IMR-90 (cell line): ENCODE measurements at regions of chr3 and their contacts with region 1.

Region 1: GRCh38 chr3:99753268-99753975 is 64.2 kb upstream of the CMSS1 start:
- DNase-seq: peak; percentile 86
- ATAC-seq: peak; percentile 92
- H3K4me3 ChIP-seq: no peak overlapping the region
- H3K27ac ChIP-seq: peak overlapping the region; percentile 30
- H3K4me1 ChIP-seq: peaks cover 13% of the 10 kb centered on the region
- H3K27me3 ChIP-seq: no peaks in the 10 kb centered on the region
- CTCF ChIP-seq: peak; percentile 85
- POLR2A ChIP-seq: 0 out of 2 replicates have a peak, but pooled peaks have one; percentile 28
- RAD21 ChIP-seq: peak; percentile 92

Region 2: GRCh38 chr3:98817547-98818041 is 935.8 kb before region 1 on chr3:
- CTCF ChIA-PET with region 1: no interaction called
- POLR2A ChIA-PET with region 1: no interaction called
- dilution Hi-C with region 1: no loop called
- in situ Hi-C with region 1: loop called (anchors 10 kb)
- intact Hi-C with region 1: loop called (anchors 5 kb)
- DNase-seq: peak; percentile 59
- ATAC-seq: peak; percentile 65
- H3K4me3 ChIP-seq: no peak overlapping the region
- H3K27ac ChIP-seq: no peak overlapping the region
- H3K4me1 ChIP-seq: peaks cover 4% of the 10 kb centered on the region
- H3K27me3 ChIP-seq: no peaks in the 10 kb centered on the region
- CTCF ChIP-seq: peak; percentile 69
- POLR2A ChIP-seq: no peak
- RAD21 ChIP-seq: peak; percentile 72

Region 3: GRCh38 chr3:99172736-99173657 is 580.4 kb before region 1 on chr3:
- CTCF ChIA-PET with region 1: no interaction called
- POLR2A ChIA-PET with region 1: no interaction called
- dilution Hi-C with region 1: no loop called
- in situ Hi-C with region 1: loop called (anchors 10 kb)
- intact Hi-C with region 1: loop called (anchors 5 kb)
- DNase-seq: peak; percentile 80
- ATAC-seq: peak; percentile 82
- H3K4me3 ChIP-seq: no peak overlapping the region
- H3K27ac ChIP-seq: no peak overlapping the region
- H3K4me1 ChIP-seq: no peaks in the 10 kb centered on the region
- H3K27me3 ChIP-seq: no peaks in the 10 kb centered on the region
- CTCF ChIP-seq: peak; percentile 86
- POLR2A ChIP-seq: no peak
- RAD21 ChIP-seq: peak; percentile 87

Region 4: DNA sequence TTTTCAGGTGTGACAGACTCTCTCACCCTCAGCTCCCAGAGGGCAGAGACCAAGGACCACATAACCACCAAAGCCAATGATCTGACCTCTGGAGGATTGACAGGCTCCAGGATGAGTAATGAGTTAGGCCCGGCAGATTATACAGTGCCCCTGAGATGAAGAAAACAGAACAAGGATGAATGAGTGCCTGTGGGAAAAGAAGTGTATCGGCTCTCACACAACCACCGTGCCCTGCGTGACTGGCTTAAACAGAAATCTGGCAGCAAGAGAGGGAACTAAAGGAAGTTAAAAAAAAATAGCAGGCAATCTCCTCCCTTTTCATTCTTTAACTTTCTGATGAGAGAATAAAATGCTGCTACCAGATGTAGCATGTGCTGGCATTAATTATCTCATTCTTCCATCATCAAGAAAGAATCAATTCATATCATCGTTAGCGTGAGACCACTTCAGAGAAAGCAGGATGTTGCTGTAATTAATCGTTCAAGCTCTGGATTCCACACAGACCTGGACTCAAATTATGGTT is 342.6 kb before region 1 on chr3:
- CTCF ChIA-PET with region 1: no interaction called
- POLR2A ChIA-PET with region 1: no interaction called
- dilution Hi-C with region 1: no loop called
- in situ Hi-C with region 1: no loop called
- intact Hi-C with region 1: loop called (anchors 10 kb)
- DNase-seq: peak; percentile 79
- ATAC-seq: peak; percentile 48
- H3K4me3 ChIP-seq: no peak overlapping the region
- H3K27ac ChIP-seq: peak overlapping the region; percentile 41
- H3K4me1 ChIP-seq: peaks cover 10% of the 10 kb centered on the region
- H3K27me3 ChIP-seq: no peaks in the 10 kb centered on the region
- CTCF ChIP-seq: no peak
- POLR2A ChIP-seq: no peak
- RAD21 ChIP-seq: no peak

Region 5: DNA sequence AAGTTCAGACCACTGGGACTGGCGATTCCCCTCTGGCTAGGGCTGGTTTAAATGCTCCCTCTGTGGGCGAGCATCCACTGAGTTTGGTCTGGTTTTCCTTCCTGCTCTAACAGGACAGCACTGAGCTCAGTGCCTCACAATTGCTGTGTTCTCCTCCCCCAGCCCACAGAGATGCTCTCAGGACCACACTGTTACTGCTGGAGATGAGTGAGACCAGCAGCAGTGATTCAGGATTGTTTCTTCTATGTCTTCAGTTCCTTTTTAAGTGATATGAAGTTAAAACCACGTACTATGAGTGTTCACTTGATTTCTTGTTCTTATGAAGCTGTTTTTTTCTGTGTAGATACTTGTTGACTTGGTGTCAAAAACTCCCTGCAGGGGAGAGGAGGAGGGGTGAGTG is 295.4 kb before region 1 on chr3:
- CTCF ChIA-PET with region 1: no interaction called
- POLR2A ChIA-PET with region 1: no interaction called
- dilution Hi-C with region 1: no loop called
- in situ Hi-C with region 1: no loop called
- intact Hi-C with region 1: no loop called
- DNase-seq: no peak
- ATAC-seq: no peak
- H3K4me3 ChIP-seq: no peak overlapping the region
- H3K27ac ChIP-seq: no peak overlapping the region
- H3K4me1 ChIP-seq: no peaks in the 10 kb centered on the region
- H3K27me3 ChIP-seq: no peaks in the 10 kb centered on the region
- CTCF ChIP-seq: no peak
- POLR2A ChIP-seq: no peak
- RAD21 ChIP-seq: no peak

Region 6: GRCh38 chr3:99532246-99532645 is 221.2 kb before region 1 on chr3:
- CTCF ChIA-PET with region 1: interaction called, 4 read pairs
- POLR2A ChIA-PET with region 1: no interaction called
- dilution Hi-C with region 1: no loop called
- in situ Hi-C with region 1: no loop called
- intact Hi-C with region 1: loop called (anchors 5 kb)
- DNase-seq: peak; percentile 77
- ATAC-seq: peak; percentile 64
- H3K4me3 ChIP-seq: no peak overlapping the region
- H3K27ac ChIP-seq: no peak overlapping the region
- H3K4me1 ChIP-seq: peaks cover 13% of the 10 kb centered on the region
- H3K27me3 ChIP-seq: no peaks in the 10 kb centered on the region
- CTCF ChIP-seq: peak; percentile 69
- POLR2A ChIP-seq: no peak
- RAD21 ChIP-seq: peak; percentile 75

Region 7: GRCh38 chr3:99586701-99587100 is 166.7 kb before region 1 on chr3:
- CTCF ChIA-PET with region 1: no interaction called
- POLR2A ChIA-PET with region 1: no interaction called
- dilution Hi-C with region 1: no loop called
- in situ Hi-C with region 1: no loop called
- intact Hi-C with region 1: no loop called
- DNase-seq: no peak
- ATAC-seq: no peak
- H3K4me3 ChIP-seq: no peak overlapping the region
- H3K27ac ChIP-seq: no peak overlapping the region
- H3K4me1 ChIP-seq: peaks cover 2% of the 10 kb centered on the region; the same call in 1 of the 2 replicates
- H3K27me3 ChIP-seq: no peaks in the 10 kb centered on the region
- CTCF ChIP-seq: no peak
- POLR2A ChIP-seq: no peak
- RAD21 ChIP-seq: no peak

Region 8: GRCh38 chr3:99789011-99789721 is 35.7 kb after region 1 on chr3:
- CTCF ChIA-PET with region 1: interaction called, 11 read pairs
- POLR2A ChIA-PET with region 1: no interaction called
- dilution Hi-C with region 1: no loop called
- in situ Hi-C with region 1: no loop called
- intact Hi-C with region 1: no loop called
- DNase-seq: peak; percentile 67
- ATAC-seq: peak; percentile 97
- H3K4me3 ChIP-seq: no peak overlapping the region
- H3K27ac ChIP-seq: no peak overlapping the region
- H3K4me1 ChIP-seq: peaks cover 4% of the 10 kb centered on the region; the same call in 1 of the 2 replicates
- H3K27me3 ChIP-seq: no peaks in the 10 kb centered on the region
- CTCF ChIP-seq: peak; percentile 77
- POLR2A ChIP-seq: no peak
- RAD21 ChIP-seq: peak; percentile 83